Caco-2 (cell line): ENCODE measurements at regions of chr3 and their contacts with region 1.

Region 1: DNA sequence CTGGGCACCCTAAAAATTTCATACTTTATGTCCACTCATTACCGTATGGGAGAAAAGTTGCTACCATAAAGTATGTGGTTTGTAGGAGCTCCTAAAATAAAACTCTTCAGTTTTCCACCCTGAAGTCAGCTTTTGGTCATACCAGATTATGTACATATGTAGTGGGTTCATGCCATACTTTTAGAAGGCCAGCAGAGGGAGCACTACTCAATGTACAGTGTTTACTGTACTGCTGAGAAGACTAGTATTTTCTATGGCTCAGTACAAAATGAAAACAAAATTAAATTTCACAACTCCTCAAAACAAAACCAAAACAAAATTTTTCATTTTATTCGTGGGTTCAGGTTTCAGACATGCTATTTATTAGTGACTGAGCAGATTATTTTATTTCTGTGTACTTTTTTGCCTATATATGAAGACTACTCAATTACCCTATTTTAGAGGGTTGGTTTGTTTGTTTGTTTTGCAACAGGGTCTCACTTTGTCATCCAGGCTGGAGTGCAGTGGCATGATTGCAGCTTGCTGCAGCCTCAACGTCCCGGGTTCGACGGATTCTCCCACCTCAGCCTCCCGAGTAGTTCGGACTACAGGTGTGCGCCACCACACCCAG is 24.3 kb downstream of the NXPE3 start:
- DNase-seq: peak; percentile 44 to 52
- H3K4me3 ChIP-seq: no peak overlapping the region
- H3K4me3 Mint-ChIP-seq: no peak overlapping the region
- H3K27ac Mint-ChIP-seq: no peak overlapping the region
- H3K4me1 ChIP-seq: no peaks in the 10 kb centered on the region
- H3K4me1 Mint-ChIP-seq: no peaks in the 10 kb centered on the region
- H3K27me3 ChIP-seq: no peaks in the 10 kb centered on the region
- H3K27me3 Mint-ChIP-seq: no peaks in the 10 kb centered on the region
- CTCF ChIP-seq: peak; percentile 66 to 87

Region 2: GRCh38 chr3:101695779-101696372 is 107.4 kb before region 1 on chr3:
- CTCF ChIA-PET with region 1: no interaction called
- POLR2A ChIA-PET with region 1: no interaction called
- intact Hi-C with region 1: loop called (anchors 2 kb)
- DNase-seq: peak in 1 of 2 experiments; percentile 66
- H3K4me3 ChIP-seq: no peak overlapping the region
- H3K4me3 Mint-ChIP-seq: no peak overlapping the region
- H3K27ac Mint-ChIP-seq: no peak overlapping the region
- H3K4me1 ChIP-seq: peaks cover 10% of the 10 kb centered on the region; the same call in 1 of the 2 replicates
- H3K4me1 Mint-ChIP-seq: peaks cover 15% of the 10 kb centered on the region
- H3K27me3 ChIP-seq: no peaks in the 10 kb centered on the region
- H3K27me3 Mint-ChIP-seq: no peaks in the 10 kb centered on the region
- CTCF ChIP-seq: peak; percentile 47 to 80

Region 3: DNA sequence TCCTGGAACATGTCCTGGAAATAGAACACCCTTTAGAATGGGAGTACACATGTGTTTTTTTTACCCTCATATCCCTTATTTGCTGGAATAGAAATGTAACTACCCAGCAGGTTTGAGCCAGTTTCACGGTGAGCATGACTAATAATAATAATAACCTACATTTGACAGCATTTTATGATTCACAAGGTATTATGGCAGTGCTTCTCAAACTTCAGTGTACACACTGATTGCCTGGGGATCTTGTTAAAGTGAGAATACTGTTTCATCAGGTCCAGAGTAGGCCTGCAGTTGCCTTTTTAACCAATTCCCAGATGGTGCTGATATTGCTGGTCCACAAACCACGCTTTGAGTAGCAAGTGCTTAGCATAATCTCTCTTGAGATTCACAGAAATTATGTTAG is 109.9 kb after region 1 on chr3:
- CTCF ChIA-PET with region 1: no interaction called
- POLR2A ChIA-PET with region 1: no interaction called
- intact Hi-C with region 1: no loop called
- DNase-seq: no peak
- H3K4me3 ChIP-seq: no peak overlapping the region
- H3K4me3 Mint-ChIP-seq: no peak overlapping the region
- H3K27ac Mint-ChIP-seq: no peak overlapping the region
- H3K4me1 ChIP-seq: no peaks in the 10 kb centered on the region
- H3K4me1 Mint-ChIP-seq: no peaks in the 10 kb centered on the region
- H3K27me3 ChIP-seq: no peaks in the 10 kb centered on the region
- H3K27me3 Mint-ChIP-seq: peaks cover 12% of the 10 kb centered on the region
- CTCF ChIP-seq: no peak

Region 4: GRCh38 chr3:102069211-102069662 is 266.0 kb after region 1 on chr3:
- CTCF ChIA-PET with region 1: no interaction called
- POLR2A ChIA-PET with region 1: no interaction called
- intact Hi-C with region 1: loop called (anchors 10 kb)
- DNase-seq: no peak
- H3K4me3 ChIP-seq: no peak overlapping the region
- H3K4me3 Mint-ChIP-seq: no peak overlapping the region
- H3K27ac Mint-ChIP-seq: no peak overlapping the region
- H3K4me1 ChIP-seq: no peaks in the 10 kb centered on the region
- H3K4me1 Mint-ChIP-seq: no peaks in the 10 kb centered on the region
- H3K27me3 ChIP-seq: no peaks in the 10 kb centered on the region
- H3K27me3 Mint-ChIP-seq: no peaks in the 10 kb centered on the region
- CTCF ChIP-seq: no peak